ENCODE measurements at regions of chr9 and their contacts with region 1.

Region 1: DNA sequence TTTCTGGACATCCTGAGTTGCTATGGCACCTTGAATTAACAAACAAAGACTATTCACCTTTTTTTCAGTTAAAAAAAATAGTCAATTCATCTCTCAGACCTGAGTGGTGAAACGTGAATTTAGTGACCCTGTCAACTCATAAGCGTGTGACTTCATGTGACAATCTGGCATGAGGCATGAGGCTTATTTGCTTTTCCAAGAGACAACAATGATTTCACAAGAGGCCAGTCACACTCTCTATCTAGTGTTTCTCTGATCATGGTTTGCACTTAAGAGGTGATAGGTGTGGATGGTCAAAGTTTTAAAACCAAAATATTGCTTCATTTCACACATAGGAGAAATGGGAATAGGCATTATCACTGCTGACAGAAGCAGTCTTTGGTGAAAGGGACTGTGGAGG is 559.6 kb upstream of the ACO1 start:
- DNase-seq: no peak
- H3K4me3 ChIP-seq: no peak overlapping the region
- H3K27ac ChIP-seq: no peak overlapping the region
- H3K4me1 ChIP-seq: no peaks in the 10 kb centered on the region
- H3K27me3 ChIP-seq: no peaks in the 10 kb centered on the region
- CTCF ChIP-seq: no peak
- POLR2A ChIP-seq: no peak

Region 2: GRCh38 chr9:31759703-31760102 is 65.2 kb before region 1 on chr9:
- intact Hi-C with region 1: loop called in 1 of 2 experiments (anchors 10 kb)
- DNase-seq: no peak
- H3K4me3 ChIP-seq: no peak overlapping the region
- H3K27ac ChIP-seq: no peak overlapping the region
- H3K4me1 ChIP-seq: no peaks in the 10 kb centered on the region
- H3K27me3 ChIP-seq: no peaks in the 10 kb centered on the region
- CTCF ChIP-seq: no peak
- POLR2A ChIP-seq: no peak

Region 3: GRCh38 chr9:31894008-31894407 is 69.1 kb after region 1 on chr9:
- intact Hi-C with region 1: no loop called
- DNase-seq: no peak
- H3K4me3 ChIP-seq: no peak overlapping the region
- H3K27ac ChIP-seq: no peak overlapping the region
- H3K4me1 ChIP-seq: no peaks in the 10 kb centered on the region
- H3K27me3 ChIP-seq: no peaks in the 10 kb centered on the region
- CTCF ChIP-seq: no peak
- POLR2A ChIP-seq: no peak

Region 4: GRCh38 chr9:32011049-32011448 is 186.2 kb after region 1 on chr9:
- intact Hi-C with region 1: no loop called
- DNase-seq: no peak
- H3K4me3 ChIP-seq: no peak overlapping the region
- H3K27ac ChIP-seq: no peak overlapping the region
- H3K4me1 ChIP-seq: no peaks in the 10 kb centered on the region
- H3K27me3 ChIP-seq: no peaks in the 10 kb centered on the region
- CTCF ChIP-seq: no peak
- POLR2A ChIP-seq: no peak